WTC11 (cell line): ENCODE measurements at regions of chr17 and their contacts with region 1.

Region 1: GRCh38 chr17:29617125-29617480 is 5.6 kb downstream of the CORO6 start:
- DNase-seq: peak; percentile 86
- ATAC-seq: peak; percentile 27
- H3K4me3 Mint-ChIP-seq: peak overlapping the region; percentile 80
- H3K27ac Mint-ChIP-seq: no peak overlapping the region
- H3K4me1 Mint-ChIP-seq: peaks cover 53% of the 10 kb centered on the region
- H3K27me3 Mint-ChIP-seq: peaks cover 80% of the 10 kb centered on the region
- CTCF ChIP-seq: peak; percentile 49

Region 2: GRCh38 chr17:29568331-29569244 is 48.5 kb before region 1 on chr17 and contains the start of gene TP53I13:
- CTCF ChIA-PET with region 1: interaction called, 112 read pairs
- POLR2A ChIA-PET with region 1: no interaction called
- DNase-seq: peak; percentile 89
- ATAC-seq: peak; percentile 50
- H3K4me3 Mint-ChIP-seq: peak within 1 kb of the TSS; percentile 91
- H3K27ac Mint-ChIP-seq: peak within 1 kb of the TSS; percentile 95
- H3K4me1 Mint-ChIP-seq: peaks cover 16% of the 10 kb centered on the region
- H3K27me3 Mint-ChIP-seq: peaks cover 44% of the 10 kb centered on the region
- CTCF ChIP-seq: no peak
- total RNA-seq, gene TP53I13: 33.1 to 41.9 TPM (median 36.7 TPM) in 3 replicates

Region 3: GRCh38 chr17:29597361-29598172 is 19.5 kb before region 1 on chr17:
- CTCF ChIA-PET with region 1: interaction called, 272 read pairs
- POLR2A ChIA-PET with region 1: interaction called, 12 read pairs
- DNase-seq: no peak
- ATAC-seq: peak; percentile 16
- H3K4me3 Mint-ChIP-seq: peak overlapping the region; percentile 46
- H3K27ac Mint-ChIP-seq: peak overlapping the region; percentile 74; the same call in 1 of the 2 replicates
- H3K4me1 Mint-ChIP-seq: peaks cover 44% of the 10 kb centered on the region
- H3K27me3 Mint-ChIP-seq: no peaks in the 10 kb centered on the region
- CTCF ChIP-seq: no peak

Region 4: DNA sequence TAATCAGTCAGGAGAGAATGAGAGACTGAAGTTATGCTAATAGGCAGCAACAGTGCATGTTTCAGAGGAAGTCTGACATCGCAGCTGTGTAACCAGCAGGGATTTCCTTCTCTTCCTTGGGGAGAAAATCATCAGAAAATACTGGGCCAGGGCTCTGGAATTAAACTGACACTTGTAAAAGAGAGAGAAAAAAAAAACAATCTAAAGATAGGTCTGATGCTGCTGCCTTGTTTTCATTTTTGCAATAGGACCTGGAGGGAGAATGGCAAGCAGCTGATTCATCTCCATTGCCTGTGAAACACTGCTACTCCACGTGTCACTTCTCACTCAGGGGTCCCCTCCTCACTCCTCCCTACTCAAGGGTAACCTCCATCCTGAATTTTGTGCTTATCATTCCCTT is 23.3 kb after region 1 on chr17:
- CTCF ChIA-PET with region 1: interaction called, 58 read pairs
- POLR2A ChIA-PET with region 1: interaction called, 5 read pairs
- DNase-seq: no peak
- ATAC-seq: no peak
- H3K4me3 Mint-ChIP-seq: no peak overlapping the region
- H3K27ac Mint-ChIP-seq: peak overlapping the region; percentile 38
- H3K4me1 Mint-ChIP-seq: peaks cover 28% of the 10 kb centered on the region
- H3K27me3 Mint-ChIP-seq: no peaks in the 10 kb centered on the region
- CTCF ChIP-seq: no peak

Region 5: GRCh38 chr17:29753845-29754439 is 136.8 kb after region 1 on chr17:
- CTCF ChIA-PET with region 1: no interaction called
- POLR2A ChIA-PET with region 1: no interaction called
- DNase-seq: no peak
- ATAC-seq: no peak
- H3K4me3 Mint-ChIP-seq: no peak overlapping the region
- H3K27ac Mint-ChIP-seq: no peak overlapping the region
- H3K4me1 Mint-ChIP-seq: no peaks in the 10 kb centered on the region
- H3K27me3 Mint-ChIP-seq: peaks cover 1% of the 10 kb centered on the region; the same call in 1 of the 2 replicates
- CTCF ChIP-seq: no peak

Region 6: GRCh38 chr17:29777663-29778062 is 160.6 kb after region 1 on chr17:
- CTCF ChIA-PET with region 1: interaction called, 34 read pairs
- POLR2A ChIA-PET with region 1: no interaction called
- DNase-seq: no peak
- ATAC-seq: no peak
- H3K4me3 Mint-ChIP-seq: no peak overlapping the region
- H3K27ac Mint-ChIP-seq: no peak overlapping the region
- H3K4me1 Mint-ChIP-seq: no peaks in the 10 kb centered on the region
- H3K27me3 Mint-ChIP-seq: no peaks in the 10 kb centered on the region
- CTCF ChIP-seq: no peak